ENCODE measurements at regions of chr10 and their contacts with region 1.

Region 1: DNA sequence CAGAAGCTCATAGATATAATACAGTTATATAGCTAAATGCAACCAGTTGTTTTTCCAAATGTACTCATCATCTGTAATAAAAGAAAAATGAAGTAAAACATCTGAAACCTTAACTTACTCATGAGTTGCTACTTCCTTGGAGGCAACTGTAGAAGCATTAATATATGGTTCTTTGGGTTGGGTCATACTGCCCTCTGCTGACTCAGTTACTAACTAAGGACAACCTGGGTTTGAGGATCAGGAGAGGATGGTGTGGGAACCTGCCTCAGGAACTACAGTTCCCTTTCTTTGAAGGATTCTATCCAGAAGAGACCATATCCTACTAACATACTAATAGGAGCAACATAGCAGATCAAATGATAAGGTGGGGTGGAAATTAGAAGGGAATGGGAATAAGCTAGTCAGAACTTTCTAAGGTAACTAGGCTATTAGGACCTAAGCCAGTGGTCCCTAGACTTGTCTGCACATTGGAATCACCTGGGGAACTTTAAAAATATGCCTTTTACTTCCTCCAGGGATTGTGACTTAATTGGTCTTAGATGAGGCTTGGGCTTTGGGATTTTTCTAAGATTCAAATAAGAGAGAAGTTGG is 20.7 kb downstream of the COX15 start:
- DNase-seq: peak; percentile 80
- ATAC-seq: peak; percentile 81
- H3K4me3 ChIP-seq: no peak overlapping the region
- H3K27ac ChIP-seq: no peak overlapping the region
- H3K4me1 ChIP-seq: peaks cover 11% of the 10 kb centered on the region; the same call in 1 of the 2 replicates
- H3K27me3 ChIP-seq: no peaks in the 10 kb centered on the region
- CTCF ChIP-seq: peak; percentile 74
- POLR2A ChIP-seq: no peak
- RAD21 ChIP-seq: peak; percentile 82

Region 2: DNA sequence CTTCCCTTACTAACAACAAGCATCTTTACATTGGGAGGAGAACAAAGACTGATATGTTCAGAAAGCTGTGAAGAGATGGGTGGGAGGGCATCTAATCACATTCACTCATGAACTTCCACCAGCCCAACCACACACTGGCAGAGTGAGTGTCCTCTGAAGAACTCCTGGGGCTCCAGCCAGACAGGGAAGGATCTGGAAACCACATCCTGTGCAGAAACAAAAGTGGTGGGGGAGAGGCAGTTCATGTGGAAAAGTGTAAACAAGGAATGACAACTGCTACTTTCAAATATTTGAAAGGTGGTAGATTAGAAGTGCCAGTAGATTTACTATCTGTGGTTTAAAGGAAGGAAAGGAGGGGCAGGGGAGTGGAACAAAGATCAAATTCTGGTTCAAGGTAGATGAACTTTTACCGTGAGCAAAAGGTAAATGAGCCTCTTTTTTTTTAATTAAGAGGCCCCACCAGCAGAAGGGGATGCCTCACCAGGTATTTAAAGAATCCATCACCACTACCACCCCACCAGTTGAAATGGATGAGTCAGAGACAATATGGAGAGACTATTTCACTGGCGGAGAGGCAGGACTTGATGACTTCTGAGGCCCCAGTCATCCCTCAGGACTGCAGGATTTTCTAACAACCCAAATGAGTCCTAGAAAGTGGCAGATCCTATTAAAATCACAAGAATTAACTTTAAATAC is 315.3 kb before region 1 on chr10:
- CTCF ChIA-PET with region 1: no interaction called
- POLR2A ChIA-PET with region 1: no interaction called
- dilution Hi-C with region 1: no loop called
- in situ Hi-C with region 1: no loop called
- intact Hi-C with region 1: loop called (anchors 1 kb)
- DNase-seq: peak; percentile 83
- ATAC-seq: peak; percentile 69
- H3K4me3 ChIP-seq: no peak overlapping the region
- H3K27ac ChIP-seq: peak overlapping the region; percentile 7; the same call in 1 of the 2 replicates
- H3K4me1 ChIP-seq: peaks cover 12% of the 10 kb centered on the region
- H3K27me3 ChIP-seq: no peaks in the 10 kb centered on the region; the same call in 1 of the 2 replicates
- CTCF ChIP-seq: no peak
- POLR2A ChIP-seq: no peak
- RAD21 ChIP-seq: no peak

Region 3: GRCh38 chr10:99430451-99431189 is 280.6 kb before region 1 on chr10 and contains the start of gene GOT1:
- CTCF ChIA-PET with region 1: no interaction called
- POLR2A ChIA-PET with region 1: no interaction called
- dilution Hi-C with region 1: no loop called
- in situ Hi-C with region 1: loop called (anchors 10 kb)
- intact Hi-C with region 1: loop called (anchors 5 kb)
- DNase-seq: peak; percentile 99
- ATAC-seq: peak; percentile 97
- H3K4me3 ChIP-seq: peak within 1 kb of the TSS; percentile 73
- H3K27ac ChIP-seq: peak within 1 kb of the TSS; percentile 61
- H3K4me1 ChIP-seq: peaks cover 2% of the 10 kb centered on the region; the same call in 1 of the 2 replicates
- H3K27me3 ChIP-seq: no peaks in the 10 kb centered on the region
- CTCF ChIP-seq: no peak; the same call in 1 of the 2 replicates
- POLR2A ChIP-seq: peak; percentile 94
- RAD21 ChIP-seq: no peak
- total RNA-seq, gene GOT1: 38.6 and 46.1 TPM in 2 replicates

Region 4: DNA sequence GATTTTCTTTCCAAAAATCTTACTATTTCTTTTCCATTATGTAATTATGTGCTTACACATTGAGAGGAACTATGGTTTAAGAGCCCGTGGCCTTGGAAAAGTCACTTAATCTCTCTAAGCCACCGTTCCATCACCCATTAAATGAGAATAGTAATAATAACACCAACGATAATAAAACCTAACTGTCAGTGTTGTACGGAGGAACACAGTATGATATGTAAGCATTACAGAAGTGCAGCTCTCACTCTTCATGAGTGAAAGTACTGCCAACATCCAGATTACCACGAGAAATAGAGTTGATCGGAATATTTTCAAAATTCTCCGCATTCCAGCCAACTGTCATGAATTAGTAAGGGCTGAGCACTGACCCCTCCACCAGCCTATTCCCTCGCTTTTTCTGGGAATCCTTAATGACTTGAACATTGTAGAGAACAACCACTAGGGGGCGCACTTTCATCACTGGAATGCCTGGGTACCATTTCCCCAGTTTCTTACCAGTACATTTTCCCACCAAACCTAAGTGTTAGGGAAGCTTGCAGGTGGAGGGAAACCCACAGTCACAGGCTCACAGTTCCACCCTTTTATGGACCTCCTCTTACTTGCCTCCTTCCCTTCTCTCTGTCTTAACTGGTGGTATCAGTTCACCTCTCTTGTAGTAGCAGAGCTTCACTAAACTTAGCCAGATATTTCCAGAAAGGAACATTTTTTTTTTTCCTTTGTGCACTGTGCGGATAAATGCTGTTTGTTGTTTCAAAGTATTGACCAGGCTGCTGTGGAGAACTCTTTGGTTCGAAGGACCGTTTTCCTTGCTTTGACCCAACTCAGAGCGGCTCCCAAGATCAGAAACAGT is 150.7 kb before region 1 on chr10:
- CTCF ChIA-PET with region 1: no interaction called
- POLR2A ChIA-PET with region 1: no interaction called
- dilution Hi-C with region 1: no loop called
- in situ Hi-C with region 1: loop called (anchors 10 kb)
- intact Hi-C with region 1: loop called (anchors 1 kb)
- DNase-seq: peak; percentile 47
- ATAC-seq: 0 out of 2 replicates have a peak, but pooled peaks have one; percentile 35
- H3K4me3 ChIP-seq: no peak overlapping the region
- H3K27ac ChIP-seq: no peak overlapping the region
- H3K4me1 ChIP-seq: no peaks in the 10 kb centered on the region
- H3K27me3 ChIP-seq: peaks cover 21% of the 10 kb centered on the region
- CTCF ChIP-seq: peak; percentile 63
- POLR2A ChIP-seq: no peak
- RAD21 ChIP-seq: peak; percentile 62

Region 5: GRCh38 chr10:99595770-99596465 is 115.3 kb before region 1 on chr10:
- CTCF ChIA-PET with region 1: no interaction called
- POLR2A ChIA-PET with region 1: no interaction called
- dilution Hi-C with region 1: no loop called
- in situ Hi-C with region 1: no loop called
- intact Hi-C with region 1: no loop called
- DNase-seq: no peak
- ATAC-seq: no peak
- H3K4me3 ChIP-seq: no peak overlapping the region
- H3K27ac ChIP-seq: no peak overlapping the region
- H3K4me1 ChIP-seq: no peaks in the 10 kb centered on the region
- H3K27me3 ChIP-seq: peaks cover 22% of the 10 kb centered on the region
- CTCF ChIP-seq: no peak
- POLR2A ChIP-seq: no peak
- RAD21 ChIP-seq: no peak

Region 6: GRCh38 chr10:99620713-99621453 is 90.3 kb before region 1 on chr10:
- CTCF ChIA-PET with region 1: interaction called, 5 read pairs
- POLR2A ChIA-PET with region 1: no interaction called
- dilution Hi-C with region 1: no loop called
- in situ Hi-C with region 1: loop called (anchors 5 kb)
- intact Hi-C with region 1: loop called (anchors 2 kb)
- DNase-seq: peak; percentile 94
- ATAC-seq: peak; percentile 92
- H3K4me3 ChIP-seq: peak overlapping the region; percentile 56
- H3K27ac ChIP-seq: peak overlapping the region; percentile 93
- H3K4me1 ChIP-seq: no peaks in the 10 kb centered on the region
- H3K27me3 ChIP-seq: no peaks in the 10 kb centered on the region
- CTCF ChIP-seq: no peak
- POLR2A ChIP-seq: peak; percentile 91
- RAD21 ChIP-seq: peak; percentile 5; the same call in 1 of the 2 replicates

Region 7: DNA sequence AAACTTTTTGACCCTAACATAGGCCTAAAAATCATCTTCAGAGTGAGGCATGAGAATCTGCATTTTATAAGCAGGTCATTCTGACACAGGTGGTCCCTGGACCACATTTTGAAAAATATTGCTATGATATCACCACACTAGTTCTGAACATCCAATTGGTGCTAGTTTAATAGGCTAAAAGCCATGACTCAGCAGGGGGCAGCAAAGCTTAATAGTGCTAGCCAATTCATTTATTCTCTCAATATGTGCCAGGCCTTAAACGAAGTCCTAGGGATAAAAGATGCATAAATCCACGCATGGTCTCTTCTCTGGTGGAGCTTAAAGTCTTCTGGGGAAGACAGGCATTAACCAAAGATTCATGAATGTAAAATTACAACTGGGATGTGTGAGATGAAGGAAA is 80.8 kb before region 1 on chr10:
- CTCF ChIA-PET with region 1: interaction called, 10 read pairs
- POLR2A ChIA-PET with region 1: no interaction called
- dilution Hi-C with region 1: no loop called
- in situ Hi-C with region 1: loop called (anchors 5 kb)
- intact Hi-C with region 1: loop called (anchors 1 kb)
- DNase-seq: peak; percentile 64
- ATAC-seq: peak; percentile 90
- H3K4me3 ChIP-seq: no peak overlapping the region
- H3K27ac ChIP-seq: no peak overlapping the region
- H3K4me1 ChIP-seq: peaks cover 1% of the 10 kb centered on the region; the same call in 1 of the 2 replicates
- H3K27me3 ChIP-seq: no peaks in the 10 kb centered on the region
- CTCF ChIP-seq: peak; percentile 69
- POLR2A ChIP-seq: no peak
- RAD21 ChIP-seq: peak; percentile 66

Measured in IMR-90 (cell line).